ENCODE measurements at regions of chr17 and their contacts with region 1.

Region 1: GRCh38 chr17:32783602-32784001 is 93.3 kb downstream of the MYO1D start:
- DNase-seq: no peak
- H3K4me3 ChIP-seq: no peak overlapping the region
- H3K27ac ChIP-seq: no peak overlapping the region
- H3K4me1 ChIP-seq: no peaks in the 10 kb centered on the region
- H3K27me3 ChIP-seq: no peaks in the 10 kb centered on the region
- CTCF ChIP-seq: peak; percentile 73 to 79 (median 74)
- POLR2A ChIP-seq: no peak

Region 2: DNA sequence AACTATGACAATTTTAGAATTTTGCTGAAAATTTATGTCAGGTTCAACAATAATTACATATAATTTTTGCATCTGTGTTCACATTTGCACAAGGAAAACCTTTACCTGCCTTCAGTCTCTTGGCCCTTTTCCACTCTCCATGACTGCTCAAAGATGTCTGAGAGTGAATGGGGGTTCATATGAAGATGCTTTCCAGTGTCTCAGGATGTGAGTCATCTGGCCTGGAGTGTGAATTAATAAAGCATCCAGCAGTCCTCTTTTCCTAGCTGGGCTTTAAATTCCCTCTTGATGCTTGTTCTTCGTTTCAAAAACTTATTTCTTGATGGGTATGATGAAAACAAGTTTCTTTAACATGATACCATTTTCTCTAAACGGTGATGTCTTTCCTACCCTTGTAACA is 196.9 kb before region 1 on chr17:
- intact Hi-C with region 1: no loop called
- DNase-seq: no peak
- H3K4me3 ChIP-seq: no peak overlapping the region
- H3K27ac ChIP-seq: no peak overlapping the region
- H3K4me1 ChIP-seq: no peaks in the 10 kb centered on the region
- H3K27me3 ChIP-seq: no peaks in the 10 kb centered on the region
- CTCF ChIP-seq: no peak
- POLR2A ChIP-seq: no peak

Region 3: GRCh38 chr17:32877164-32877764 is 93.7 kb after region 1 on chr17:
- intact Hi-C with region 1: loop called (anchors 5 kb)
- DNase-seq: peak; percentile 92
- H3K4me3 ChIP-seq: peak overlapping the region; percentile 91 to 92
- H3K27ac ChIP-seq: peak overlapping the region in 1 of 2 donors; percentile 96
- H3K4me1 ChIP-seq: peaks cover 8% of the 10 kb centered on the region
- H3K27me3 ChIP-seq: no peaks in the 10 kb centered on the region
- CTCF ChIP-seq: peak; percentile 71 to 99 (median 91)
- POLR2A ChIP-seq: no peak

Measured in testis (tissue), 5 donors.